CD4-positive, alpha-beta T cell (primary cell): ENCODE measurements at regions of chr14 and their contacts with region 1.

Region 1: DNA sequence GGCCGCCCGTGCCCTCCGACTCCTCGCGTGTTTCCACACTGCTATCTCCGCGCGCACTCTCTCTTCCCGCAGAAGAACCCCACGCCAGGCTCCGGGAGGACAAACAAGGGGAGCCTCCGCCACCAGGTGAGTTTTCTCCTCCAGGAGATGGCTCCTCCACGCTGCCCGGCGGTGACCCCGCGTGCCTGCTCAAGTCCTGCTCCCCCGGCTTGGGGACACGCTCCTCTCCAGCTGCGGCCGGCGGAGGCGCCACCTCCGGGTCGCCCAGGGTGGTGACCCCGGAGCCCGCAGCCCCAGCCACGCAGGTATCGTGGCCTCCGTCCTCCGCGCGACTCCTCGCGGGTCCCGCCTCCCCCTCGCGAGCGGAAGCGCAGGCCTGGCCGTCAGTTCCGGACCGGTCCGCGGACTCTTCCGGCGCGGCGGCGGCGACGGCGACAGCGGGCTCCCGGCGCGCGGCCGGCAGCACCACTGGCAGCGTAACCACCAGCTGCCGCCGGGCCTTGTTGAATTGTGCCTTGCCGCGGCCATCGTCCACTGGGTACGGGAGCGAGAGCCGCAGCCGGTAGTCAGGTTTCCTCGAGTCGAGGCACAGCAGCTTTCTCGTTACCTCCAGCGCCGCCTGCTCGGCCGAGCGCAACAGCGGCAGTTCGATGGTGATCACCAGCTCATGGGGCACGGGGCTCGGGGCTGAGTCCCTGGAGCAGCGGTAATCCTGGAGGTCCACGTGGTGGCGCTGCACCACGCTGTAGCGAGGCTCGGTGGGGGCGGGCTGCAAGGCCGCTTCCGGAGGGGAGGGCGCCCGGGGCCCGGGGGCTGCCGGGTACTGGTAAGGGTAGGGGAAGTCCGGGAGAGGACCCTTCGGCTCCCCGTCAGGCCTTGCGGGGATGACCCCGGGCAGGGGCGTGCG is 1.2 kb downstream of the DNAAF2 start:
- DNase-seq: peak; percentile 89 to 97 (median 93)
- ATAC-seq: peak; percentile 82
- H3K4me3 ChIP-seq: peak overlapping the region; percentile 83
- H3K4me3 Mint-ChIP-seq: peak overlapping the region; percentile 98
- H3K27ac ChIP-seq: peak overlapping the region; percentile 97 to 99
- H3K27ac Mint-ChIP-seq: peak overlapping the region; percentile 83
- H3K4me1 ChIP-seq: peaks cover 51% of the 10 kb centered on the region
- H3K4me1 Mint-ChIP-seq: peaks cover 46% of the 10 kb centered on the region
- H3K27me3 ChIP-seq: no peaks in the 10 kb centered on the region
- H3K27me3 Mint-ChIP-seq: no peaks in the 10 kb centered on the region
- CTCF ChIP-seq: peak; percentile 86

Region 2: DNA sequence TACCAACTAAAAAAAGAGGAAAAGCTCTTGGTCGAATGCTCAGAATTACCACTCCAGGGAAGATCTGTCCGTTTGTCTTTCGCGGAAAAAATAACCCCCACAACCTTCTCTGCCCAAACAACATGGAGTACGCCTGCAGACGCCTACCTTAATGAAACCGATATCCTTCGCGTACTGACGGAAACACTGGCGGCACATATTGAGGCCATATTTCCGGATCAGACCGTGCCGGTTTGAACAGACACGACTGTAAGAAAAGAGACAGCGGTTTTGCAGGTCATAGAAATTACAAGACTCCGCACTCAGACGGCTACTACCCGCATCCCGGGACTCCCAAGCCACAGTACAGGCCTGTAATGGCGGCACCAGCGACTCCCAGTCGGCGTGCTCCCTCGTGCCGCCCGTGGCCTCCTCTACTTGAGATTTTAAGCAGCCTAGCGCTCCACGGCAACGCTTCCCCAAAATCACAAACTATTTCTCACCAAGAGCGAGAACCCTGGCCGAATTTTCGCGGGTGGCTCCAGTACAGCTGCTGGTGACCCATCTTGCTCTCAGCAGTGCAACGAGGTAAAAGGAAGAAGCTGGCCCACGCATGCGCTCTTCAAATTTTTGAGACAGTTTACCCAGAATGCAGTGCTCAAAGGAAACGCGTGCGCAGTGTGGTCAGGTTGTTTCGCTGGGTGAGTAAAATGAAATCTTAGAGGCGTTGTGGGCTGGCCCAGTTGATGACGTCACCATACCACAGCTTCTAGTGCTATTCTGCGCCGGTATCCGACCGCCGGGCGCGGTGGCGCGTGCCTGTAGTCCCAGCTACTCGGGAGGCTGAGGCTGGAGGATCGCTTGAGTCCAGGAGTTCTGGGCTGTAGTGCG is 47.9 kb before region 1 on chr14 and contains the start of gene RPS29:
- CTCF ChIA-PET with region 1: interaction called, 48 read pairs
- POLR2A ChIA-PET with region 1: interaction called, 81 read pairs
- intact Hi-C with region 1: loop called (anchors 1 to 2 kb)
- DNase-seq: peak; percentile 95 to 100 (median 98)
- ATAC-seq: peak; percentile 77
- H3K4me3 ChIP-seq: peak within 1 kb of the TSS; percentile 89
- H3K4me3 Mint-ChIP-seq: peak within 1 kb of the TSS; percentile 90
- H3K27ac ChIP-seq: peak within 1 kb of the TSS; percentile 93 to 95
- H3K27ac Mint-ChIP-seq: peak within 1 kb of the TSS; percentile 99
- H3K4me1 ChIP-seq: peaks cover 33% of the 10 kb centered on the region
- H3K4me1 Mint-ChIP-seq: peaks cover 52% of the 10 kb centered on the region
- H3K27me3 ChIP-seq: no peaks in the 10 kb centered on the region
- H3K27me3 Mint-ChIP-seq: peaks cover 10% of the 10 kb centered on the region
- CTCF ChIP-seq: no peak
- total RNA-seq, gene RPS29: 3,356 to 3,996 TPM

Region 3: DNA sequence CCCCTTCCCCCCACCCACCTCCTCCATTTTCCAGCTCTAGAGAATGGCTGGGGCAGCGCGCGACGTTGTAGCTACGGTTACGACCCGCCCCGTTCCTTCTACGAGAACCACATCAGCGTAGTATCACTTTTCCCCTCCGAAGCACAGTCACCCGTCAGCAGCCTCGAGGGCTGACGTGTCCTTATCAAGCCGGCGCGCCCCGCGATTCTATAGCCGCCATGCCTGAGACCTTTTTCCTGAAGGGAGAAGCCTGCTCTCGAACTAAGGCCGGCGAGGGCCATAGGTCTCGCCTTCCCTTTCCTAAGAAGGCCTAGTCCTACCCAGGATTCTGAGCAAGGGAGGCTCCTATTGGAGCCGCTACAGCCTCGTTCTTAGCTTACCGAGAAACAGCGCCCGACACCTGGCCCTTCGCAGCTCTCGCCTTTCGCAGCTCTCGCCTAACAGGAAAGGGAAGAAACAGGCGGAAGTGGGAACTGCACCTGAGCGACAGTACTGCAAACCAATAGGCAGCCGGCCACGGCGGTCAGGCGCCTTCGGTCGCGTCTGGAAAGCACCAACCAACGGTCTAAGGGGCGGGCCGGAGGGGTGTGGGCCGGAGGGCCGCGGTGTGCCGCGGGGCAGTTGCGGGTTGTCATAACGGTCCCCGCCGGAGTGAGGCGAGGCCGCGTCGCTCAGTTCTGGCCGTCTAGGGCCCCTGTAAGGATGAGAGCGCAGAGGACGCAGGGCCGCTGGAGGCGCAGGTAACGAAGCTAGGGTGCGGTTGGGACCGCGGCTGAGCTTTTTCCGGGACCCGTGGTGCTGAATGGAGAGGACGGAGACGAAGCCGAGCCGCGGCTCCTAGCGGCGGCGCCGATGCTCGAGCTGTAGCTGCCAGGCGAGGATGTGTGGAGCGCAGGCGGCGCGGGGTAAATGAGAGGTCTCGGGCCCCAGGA is 13.4 kb before region 1 on chr14 and contains the starts of genes MGAT2 and RPL36AL:
- CTCF ChIA-PET with region 1: interaction called, 168 read pairs
- POLR2A ChIA-PET with region 1: interaction called, 350 read pairs
- intact Hi-C with region 1: loop called (anchors 1 to 2 kb)
- DNase-seq: peak; percentile 84 to 97 (median 91)
- ATAC-seq: peak; percentile 79
- H3K4me3 ChIP-seq: peak within 1 kb of the TSS; percentile 95
- H3K4me3 Mint-ChIP-seq: peak within 1 kb of the TSS; percentile 99
- H3K27ac ChIP-seq: peak within 1 kb of the TSS; percentile 98 to 99
- H3K27ac Mint-ChIP-seq: peak within 1 kb of the TSS; percentile 100
- H3K4me1 ChIP-seq: peaks cover 36% of the 10 kb centered on the region
- H3K4me1 Mint-ChIP-seq: peaks cover 73% of the 10 kb centered on the region
- H3K27me3 ChIP-seq: no peaks in the 10 kb centered on the region
- H3K27me3 Mint-ChIP-seq: no peaks in the 10 kb centered on the region
- CTCF ChIP-seq: peak; percentile 22
- total RNA-seq, gene MGAT2: 15.0 to 15.1 TPM
- total RNA-seq, gene RPL36AL: 339 to 370 TPM

Region 4: GRCh38 chr14:49828640-49829039 is 194.7 kb after region 1 on chr14:
- CTCF ChIA-PET with region 1: interaction called, 7 read pairs
- POLR2A ChIA-PET with region 1: interaction called, 5 read pairs
- intact Hi-C with region 1: loop called (anchors 1 to 2 kb)
- DNase-seq: no peak
- ATAC-seq: no peak
- H3K4me3 ChIP-seq: no peak overlapping the region
- H3K4me3 Mint-ChIP-seq: no peak overlapping the region
- H3K27ac ChIP-seq: no peak overlapping the region
- H3K27ac Mint-ChIP-seq: no peak overlapping the region
- H3K4me1 ChIP-seq: no peaks in the 10 kb centered on the region
- H3K4me1 Mint-ChIP-seq: peaks cover 5% of the 10 kb centered on the region
- H3K27me3 ChIP-seq: no peaks in the 10 kb centered on the region
- H3K27me3 Mint-ChIP-seq: no peaks in the 10 kb centered on the region
- CTCF ChIP-seq: no peak

Region 5: DNA sequence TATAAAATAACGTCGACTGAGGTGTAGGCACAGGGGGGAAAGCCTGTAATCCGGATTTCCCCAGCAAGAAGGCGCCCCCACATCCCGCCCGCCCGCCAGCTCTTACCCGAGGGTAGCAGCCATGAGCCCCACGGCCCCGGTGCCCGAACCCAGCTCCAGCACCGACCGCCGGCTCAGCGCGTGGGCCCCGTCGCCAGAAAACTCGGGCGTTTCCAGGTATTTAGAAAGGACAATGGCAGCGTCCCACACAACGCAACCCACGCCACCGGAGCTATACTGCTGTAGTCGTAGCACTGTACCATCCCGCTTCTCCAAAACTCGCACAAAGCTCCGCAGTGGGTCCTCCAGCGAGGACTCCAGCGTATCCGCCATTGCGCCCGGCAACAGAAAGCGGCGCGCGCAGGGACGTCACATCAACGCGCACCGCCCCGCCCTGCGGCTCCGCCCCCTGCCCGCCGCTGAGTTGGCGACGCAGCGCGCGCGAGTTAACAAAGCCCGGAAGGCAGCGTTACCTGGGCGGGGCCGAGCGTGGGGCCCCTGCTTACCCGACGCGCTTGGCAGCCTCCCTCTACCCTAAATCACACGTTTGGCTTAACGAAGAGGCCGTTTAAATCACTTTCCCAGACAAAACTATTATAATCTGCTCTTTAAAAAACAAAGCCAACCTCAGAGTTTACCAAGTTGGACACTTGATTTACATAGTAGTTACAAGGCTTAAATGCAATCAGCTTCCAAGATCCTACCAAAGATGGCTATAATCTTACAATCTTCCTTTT is 482.5 kb after region 1 on chr14 and contains the start of gene VCPKMT:
- CTCF ChIA-PET with region 1: no interaction called
- POLR2A ChIA-PET with region 1: interaction called, 11 read pairs
- intact Hi-C with region 1: loop called in 1 of 2 experiments (anchors 1 kb)
- DNase-seq: peak; percentile 90 to 98 (median 96)
- ATAC-seq: peak; percentile 98
- H3K4me3 ChIP-seq: peak within 1 kb of the TSS; percentile 75
- H3K4me3 Mint-ChIP-seq: peak within 1 kb of the TSS; percentile 99
- H3K27ac ChIP-seq: peak within 1 kb of the TSS; percentile 81 to 95
- H3K27ac Mint-ChIP-seq: peak within 1 kb of the TSS; percentile 99
- H3K4me1 ChIP-seq: peaks cover 15% of the 10 kb centered on the region
- H3K4me1 Mint-ChIP-seq: peaks cover 31% of the 10 kb centered on the region
- H3K27me3 ChIP-seq: no peaks in the 10 kb centered on the region
- H3K27me3 Mint-ChIP-seq: no peaks in the 10 kb centered on the region
- CTCF ChIP-seq: no peak
- total RNA-seq, gene VCPKMT: 30.4 to 32.4 TPM